OCI-LY7 (cell line): ENCODE measurements at regions of chr21 and their contacts with region 1.

Region 1: DNA sequence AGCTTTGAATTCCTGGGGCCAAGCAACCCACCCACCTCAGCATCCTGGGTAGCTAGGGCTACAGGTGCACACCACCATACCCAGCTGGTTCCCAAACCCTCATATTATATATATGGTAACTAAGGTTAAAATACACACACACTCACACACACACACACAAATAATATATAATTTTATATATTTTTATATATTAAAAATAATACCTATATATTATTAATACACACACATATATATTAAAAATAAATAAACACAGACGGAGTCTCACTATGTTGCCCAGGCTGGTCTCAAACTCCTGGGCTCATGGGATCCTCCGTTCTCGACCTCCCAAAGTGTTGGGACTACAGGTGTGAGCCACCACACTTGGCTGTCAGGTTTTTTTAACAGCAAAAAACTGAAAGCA is 31.9 kb downstream of the SCAF4 start:
- DNase-seq: no peak
- H3K4me3 ChIP-seq: no peak overlapping the region
- H3K27ac ChIP-seq: no peak overlapping the region
- H3K4me1 ChIP-seq: no peaks in the 10 kb centered on the region
- CTCF ChIP-seq: no peak

Region 2: DNA sequence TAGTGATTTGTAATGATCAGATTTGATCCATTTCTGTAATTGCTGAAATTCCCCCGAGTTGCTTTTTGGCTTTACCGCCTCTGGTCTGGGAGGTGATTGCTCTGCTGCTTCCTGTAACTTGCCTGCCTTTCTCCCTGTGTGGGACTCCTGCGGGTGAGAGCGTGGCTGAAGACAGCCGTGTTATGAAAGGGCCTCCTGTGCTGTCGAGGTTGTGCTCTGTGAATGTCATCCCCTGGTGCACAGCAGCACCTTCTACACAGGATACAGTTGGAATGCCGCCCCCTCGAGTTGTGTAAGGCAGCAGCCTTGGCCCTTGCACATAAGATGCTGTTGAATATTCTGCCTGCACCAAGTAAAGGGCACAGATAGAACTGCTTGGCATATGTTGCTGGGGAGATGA is 34.6 kb before region 1 on chr21:
- CTCF ChIA-PET with region 1: no interaction called
- POLR2A ChIA-PET with region 1: interaction called, 4 read pairs
- intact Hi-C with region 1: loop called (anchors 5 kb)
- DNase-seq: no peak
- H3K4me3 ChIP-seq: no peak overlapping the region
- H3K27ac ChIP-seq: no peak overlapping the region
- H3K4me1 ChIP-seq: peaks cover 55% of the 10 kb centered on the region
- CTCF ChIP-seq: no peak